Heart left ventricle (tissue), 16 donors: ENCODE measurements at regions of chr14 and their contacts with region 1.

Region 1: GRCh38 chr14:104985675-104986525 is at the start of gene CLBA1:
- DNase-seq: peak; percentile 90 to 95 (median 92)
- ATAC-seq: peak; percentile 86 to 97 (median 94)
- H3K4me3 ChIP-seq: peak within 1 kb of the TSS; percentile 60 to 98 (median 89)
- H3K27ac ChIP-seq: peak within 1 kb of the TSS in 11 of 12 donors; percentile 36 to 87 (median 74)
- H3K4me1 ChIP-seq: peaks cover 0 to 20% (median 10%) of the 10 kb centered on the region in 12 donors
- H3K27me3 ChIP-seq: no peaks in the 10 kb centered on the region
- CTCF ChIP-seq: peak in 1 of 12 donors; percentile 3
- POLR2A ChIP-seq: peak in 1 of 2 donors; percentile 49
- total RNA-seq, gene CLBA1: 0.76 to 3.7 (median 2.6) TPM

Region 2: GRCh38 chr14:105020815-105021655 is 35.1 kb after region 1 on chr14 and contains the start of gene CDCA4:
- intact Hi-C with region 1: loop called in 7 of 10 experiments (anchors 2 to 5 kb)
- DNase-seq: peak; percentile 97 to 99 (median 98)
- ATAC-seq: peak; percentile 97 to 98 (median 98)
- H3K4me3 ChIP-seq: peak within 1 kb of the TSS; percentile 52 to 96 (median 90)
- H3K27ac ChIP-seq: peak within 1 kb of the TSS; percentile 40 to 91 (median 82)
- H3K4me1 ChIP-seq: peaks cover 0 to 61% (median 20%) of the 10 kb centered on the region in 12 donors
- H3K27me3 ChIP-seq: no peaks in the 10 kb centered on the region
- CTCF ChIP-seq: peak in 1 of 12 donors; percentile 13
- POLR2A ChIP-seq: peak in 1 of 2 donors; percentile 74
- total RNA-seq, gene CDCA4: 1.4 to 6.0 (median 2.4) TPM

Region 3: DNA sequence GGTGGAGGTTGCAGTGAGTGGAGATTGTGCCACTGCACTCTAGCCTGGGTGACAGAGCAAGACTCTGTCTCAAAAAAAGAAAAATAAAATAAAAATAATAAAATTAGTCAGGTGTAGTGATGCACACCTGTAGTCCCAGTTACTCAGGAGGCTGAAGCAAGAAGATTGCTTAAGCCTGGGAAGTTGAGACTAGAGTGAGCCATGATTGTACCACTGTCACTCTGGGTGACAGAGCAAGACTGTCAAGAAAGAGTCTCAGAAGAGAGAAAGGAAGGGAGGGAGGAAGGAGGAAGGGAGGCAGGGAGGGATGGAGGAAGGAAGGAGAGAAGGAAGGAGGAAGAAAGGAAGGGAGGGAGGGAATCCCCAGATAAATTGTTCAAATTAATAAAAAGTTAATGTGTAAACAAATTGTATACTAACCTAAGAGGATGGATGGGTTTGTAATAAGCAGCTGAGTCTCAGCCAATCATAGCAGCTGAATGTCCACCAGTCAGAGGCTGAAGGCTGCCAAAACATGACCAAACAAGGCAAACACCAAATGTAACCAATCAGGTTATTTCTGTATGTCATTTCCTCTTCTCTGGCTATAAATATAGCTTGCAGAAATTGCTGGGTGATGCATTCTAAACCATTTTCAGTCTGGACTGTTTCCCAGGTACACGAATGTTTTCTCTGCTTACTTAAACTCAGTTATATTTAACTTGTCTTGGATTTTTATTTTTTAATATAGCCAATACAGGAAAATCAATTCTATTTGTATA is 41.1 kb after region 1 on chr14:
- intact Hi-C with region 1: loop called in 6 of 10 experiments (anchors 5 kb)
- DNase-seq: no peak
- ATAC-seq: no peak
- H3K4me3 ChIP-seq: no peak overlapping the region
- H3K27ac ChIP-seq: peak overlapping the region in 1 of 12 donors; percentile 84
- H3K4me1 ChIP-seq: peaks cover 0 to 49% (median 3%) of the 10 kb centered on the region in 12 donors
- H3K27me3 ChIP-seq: peaks cover 0 to 4% (median 0%) of the 10 kb centered on the region in 9 donors
- CTCF ChIP-seq: no peak
- POLR2A ChIP-seq: no peak

Region 4: GRCh38 chr14:105075379-105076295 is 89.7 kb after region 1 on chr14:
- intact Hi-C with region 1: no loop called
- DNase-seq: peak; percentile 56 to 82 (median 69)
- ATAC-seq: peak; percentile 70 to 91 (median 77)
- H3K4me3 ChIP-seq: peak overlapping the region in 8 of 12 donors; percentile 15 to 38 (median 23)
- H3K27ac ChIP-seq: peak overlapping the region in 10 of 12 donors; percentile 10 to 73 (median 46)
- H3K4me1 ChIP-seq: peaks cover 0 to 41% (median 19%) of the 10 kb centered on the region in 12 donors
- H3K27me3 ChIP-seq: peaks cover 0 to 28% (median 3%) of the 10 kb centered on the region in 9 donors
- CTCF ChIP-seq: no peak
- POLR2A ChIP-seq: no peak